ENCODE measurements at regions of chr3 and their contacts with region 1.

Region 1: DNA sequence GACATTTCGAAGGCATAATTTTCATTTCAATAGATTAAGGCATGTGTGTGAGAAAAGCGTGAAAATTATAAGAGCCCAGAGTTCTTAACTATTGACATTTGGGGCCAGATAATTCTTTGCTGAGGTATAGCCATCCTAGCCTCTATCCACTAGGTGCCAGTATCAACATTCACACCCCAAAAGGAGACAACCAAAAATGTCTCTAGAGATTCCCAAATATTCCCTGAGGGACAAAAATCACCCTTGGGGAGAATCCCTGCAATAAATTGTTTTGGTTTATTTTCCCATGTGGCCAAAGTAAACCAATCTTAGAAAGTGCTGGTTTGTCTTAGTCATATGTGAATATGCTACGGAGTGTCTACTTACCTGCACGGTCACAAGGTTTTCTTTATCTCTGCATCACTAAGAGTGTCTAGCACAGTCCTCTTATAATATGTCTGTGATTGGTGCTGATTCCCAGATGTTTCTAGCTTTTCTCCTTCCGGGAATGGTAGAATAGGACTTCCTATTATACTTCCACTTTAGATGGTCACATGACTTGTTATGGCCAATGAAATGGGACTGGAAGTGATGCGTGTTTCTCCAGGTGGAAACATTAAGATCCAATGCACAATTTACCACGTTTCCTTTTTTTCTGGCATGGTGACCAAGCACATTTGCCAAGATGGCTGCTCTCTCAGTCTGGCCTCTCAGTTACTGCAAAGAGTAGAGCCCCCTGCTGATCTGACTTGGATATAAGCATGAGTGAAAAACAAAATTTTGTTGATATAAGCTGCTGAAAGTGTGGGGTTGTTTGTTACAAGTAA is 8.0 kb upstream of the KBTBD8 start:
- DNase-seq: no peak
- H3K4me3 ChIP-seq: no peak overlapping the region
- H3K27ac ChIP-seq: no peak overlapping the region
- H3K4me1 ChIP-seq: no peaks in the 10 kb centered on the region
- H3K27me3 ChIP-seq: peaks cover 0 to 11% of the 10 kb centered on the region in 2 donors
- CTCF ChIP-seq: no peak
- POLR2A ChIP-seq: no peak

Region 2: DNA sequence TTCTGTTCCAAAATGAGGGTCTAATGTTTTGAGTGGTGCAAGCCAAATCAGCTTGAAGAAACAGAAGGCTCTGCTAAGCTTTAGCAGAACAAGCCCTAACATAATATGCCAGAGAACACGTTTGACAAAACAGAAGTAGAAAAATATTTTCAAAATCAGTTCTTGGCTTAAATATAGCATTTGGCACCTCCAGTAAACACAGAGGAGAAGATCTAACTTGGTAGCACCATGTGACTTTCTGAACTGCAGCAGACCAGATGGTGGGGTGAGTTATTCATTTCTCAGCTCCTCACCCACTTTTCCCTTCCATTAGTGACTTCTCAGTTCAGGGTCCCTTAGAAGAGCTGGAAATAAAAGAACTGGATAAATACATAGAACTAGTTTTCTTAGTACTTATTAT is 1347.2 kb before region 1 on chr3:
- intact Hi-C with region 1: loop called (anchors 10 kb)
- DNase-seq: no peak
- H3K4me3 ChIP-seq: no peak overlapping the region
- H3K27ac ChIP-seq: no peak overlapping the region
- H3K4me1 ChIP-seq: no peaks in the 10 kb centered on the region
- H3K27me3 ChIP-seq: no peaks in the 10 kb centered on the region
- CTCF ChIP-seq: no peak
- POLR2A ChIP-seq: no peak